ENCODE measurements at regions of chr5 and their contacts with region 1.

Region 1: GRCh38 chr5:146965761-146966659 is 87.5 kb upstream of the PPP2R2B start:
- DNase-seq: peak; percentile 67
- ATAC-seq: peak; percentile 87
- H3K4me3 Mint-ChIP-seq: no peak overlapping the region
- H3K27ac Mint-ChIP-seq: no peak overlapping the region
- H3K4me1 Mint-ChIP-seq: peaks cover 3% of the 10 kb centered on the region
- H3K27me3 Mint-ChIP-seq: no peaks in the 10 kb centered on the region
- CTCF ChIP-seq: peak; percentile 86

Region 2: DNA sequence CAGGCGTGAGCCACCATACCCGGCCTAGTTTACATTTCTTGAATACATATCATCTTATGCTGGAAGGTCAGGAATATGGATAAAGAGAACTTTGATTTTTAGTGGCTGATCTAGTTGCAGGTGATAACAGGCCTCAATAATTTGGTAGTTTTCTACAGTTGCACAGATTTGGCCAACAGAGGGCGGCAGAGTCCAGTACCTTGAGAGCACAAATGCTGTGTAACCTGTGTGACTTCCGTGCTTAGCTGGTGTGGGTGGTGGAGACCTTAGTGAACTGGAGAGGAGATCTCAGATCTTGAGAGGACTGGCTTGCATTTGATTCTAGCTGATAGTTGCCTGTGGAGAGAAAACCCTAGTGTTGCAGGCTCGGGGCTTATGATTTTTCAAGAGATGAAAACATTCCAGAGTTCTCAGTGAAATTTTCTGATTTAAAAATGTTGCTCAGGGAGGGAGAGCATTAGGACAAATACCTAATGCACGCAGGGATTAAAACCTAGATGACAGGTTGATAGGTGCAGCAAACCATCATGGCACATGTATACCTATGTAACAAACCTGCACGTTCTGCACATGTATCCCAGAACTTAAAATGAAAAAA is 432.7 kb before region 1 on chr5:
- CTCF ChIA-PET with region 1: interaction called, 83 read pairs
- POLR2A ChIA-PET with region 1: no interaction called
- intact Hi-C with region 1: no loop called
- DNase-seq: peak; percentile 89
- ATAC-seq: peak; percentile 95
- H3K4me3 Mint-ChIP-seq: no peak overlapping the region
- H3K27ac Mint-ChIP-seq: no peak overlapping the region
- H3K4me1 Mint-ChIP-seq: peaks cover 3% of the 10 kb centered on the region
- H3K27me3 Mint-ChIP-seq: peaks cover 1% of the 10 kb centered on the region
- CTCF ChIP-seq: peak; percentile 73

Region 3: DNA sequence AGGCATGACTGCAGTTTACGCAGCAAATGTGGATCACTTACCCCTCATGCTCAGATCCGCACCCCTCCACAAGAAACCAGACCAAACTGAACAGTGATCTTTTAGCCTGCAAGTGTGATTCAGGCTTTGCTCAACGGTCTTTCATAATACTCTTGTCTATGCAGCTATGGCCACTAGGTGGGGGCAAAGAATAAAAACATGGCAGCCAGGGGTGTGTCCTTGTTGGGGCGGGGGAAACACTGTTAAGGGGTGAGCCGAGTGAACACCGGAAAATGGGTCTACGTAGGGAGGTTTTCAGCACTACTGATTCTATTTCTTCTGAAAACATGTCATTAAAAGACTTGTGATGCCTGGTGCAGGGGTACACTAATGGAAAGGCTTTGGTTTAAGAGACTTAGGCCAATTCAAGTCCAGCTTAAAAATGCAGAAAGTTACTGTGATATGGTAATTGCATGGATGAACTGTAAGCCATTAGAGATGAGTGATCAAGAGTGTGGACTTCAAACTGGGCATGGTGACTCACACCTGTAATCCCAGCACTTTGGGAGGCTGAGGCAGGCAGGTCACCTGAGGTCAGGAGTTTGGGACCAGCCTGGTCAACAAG is 400.1 kb before region 1 on chr5:
- CTCF ChIA-PET with region 1: interaction called, 15 read pairs
- POLR2A ChIA-PET with region 1: no interaction called
- intact Hi-C with region 1: loop called (anchors 5 kb)
- DNase-seq: peak; percentile 76
- ATAC-seq: peak; percentile 100
- H3K4me3 Mint-ChIP-seq: no peak overlapping the region
- H3K27ac Mint-ChIP-seq: no peak overlapping the region
- H3K4me1 Mint-ChIP-seq: peaks cover 5% of the 10 kb centered on the region
- H3K27me3 Mint-ChIP-seq: peaks cover 2% of the 10 kb centered on the region
- CTCF ChIP-seq: peak; percentile 65

Region 4: DNA sequence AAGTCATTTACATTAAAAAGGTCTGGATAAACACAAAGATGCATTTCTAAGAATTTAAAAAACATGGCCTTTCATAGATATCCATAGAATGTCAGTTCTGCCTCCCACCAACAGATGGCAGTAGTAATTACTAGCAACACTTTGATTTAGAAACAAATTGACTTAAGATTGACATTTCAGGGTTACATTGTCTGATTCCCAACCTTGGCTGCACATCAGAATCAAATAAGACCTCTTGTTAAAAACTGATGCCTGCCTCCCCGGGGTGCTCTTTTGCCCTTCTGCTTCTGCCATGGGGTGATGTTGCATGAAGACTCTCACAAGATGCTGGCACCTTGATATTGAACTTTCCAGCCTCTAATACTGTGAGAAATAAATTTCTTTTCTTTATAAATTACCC is 303.8 kb before region 1 on chr5:
- CTCF ChIA-PET with region 1: interaction called, 59 read pairs
- POLR2A ChIA-PET with region 1: no interaction called
- intact Hi-C with region 1: loop called (anchors 2 kb)
- DNase-seq: no peak
- ATAC-seq: no peak
- H3K4me3 Mint-ChIP-seq: no peak overlapping the region
- H3K27ac Mint-ChIP-seq: no peak overlapping the region
- H3K4me1 Mint-ChIP-seq: peaks cover 6% of the 10 kb centered on the region
- H3K27me3 Mint-ChIP-seq: no peaks in the 10 kb centered on the region
- CTCF ChIP-seq: peak; percentile 82

Region 5: DNA sequence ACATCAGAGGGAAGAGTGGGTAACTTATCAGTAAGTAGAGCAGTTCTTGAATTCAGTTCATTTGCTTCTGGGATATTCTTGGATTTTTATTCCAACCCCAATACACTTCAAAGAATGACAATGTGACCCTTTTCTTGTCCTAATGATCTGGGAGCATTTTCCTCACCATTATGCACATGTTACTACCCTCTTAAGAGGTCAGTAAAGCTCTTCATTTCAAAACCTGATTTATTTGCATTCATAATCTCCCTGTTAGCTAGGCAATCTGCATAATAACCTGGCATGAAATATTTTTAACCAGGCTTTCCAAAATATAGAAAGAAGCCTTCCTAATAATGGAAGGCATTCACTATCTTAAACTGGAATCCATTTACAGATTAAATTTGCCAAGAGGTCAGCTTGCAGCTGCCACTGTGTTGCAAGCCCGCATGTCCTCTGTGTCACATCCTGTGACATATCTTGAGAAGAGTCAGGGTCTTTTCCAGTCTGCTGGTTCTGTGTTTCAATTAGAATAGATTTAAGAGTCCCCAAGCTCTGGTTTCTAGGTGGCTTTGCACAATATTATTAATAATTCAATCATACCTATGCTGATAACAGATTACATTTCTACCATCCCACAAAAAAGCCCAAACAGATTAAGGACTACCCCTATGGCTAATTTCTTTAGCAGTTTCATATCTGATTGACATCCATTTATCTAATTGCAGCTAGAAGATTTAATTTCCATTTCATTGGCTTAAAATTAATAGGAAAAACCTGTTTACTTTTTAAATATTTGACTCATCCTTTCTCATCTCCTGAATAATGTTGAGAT is 56.5 kb before region 1 on chr5:
- CTCF ChIA-PET with region 1: no interaction called
- POLR2A ChIA-PET with region 1: no interaction called
- intact Hi-C with region 1: no loop called
- DNase-seq: no peak
- ATAC-seq: no peak
- H3K4me3 Mint-ChIP-seq: no peak overlapping the region
- H3K27ac Mint-ChIP-seq: no peak overlapping the region
- H3K4me1 Mint-ChIP-seq: peaks cover 7% of the 10 kb centered on the region
- H3K27me3 Mint-ChIP-seq: no peaks in the 10 kb centered on the region
- CTCF ChIP-seq: no peak

Region 6: GRCh38 chr5:147188200-147189108 is 222.4 kb after region 1 on chr5:
- CTCF ChIA-PET with region 1: interaction called, 8 read pairs
- POLR2A ChIA-PET with region 1: no interaction called
- intact Hi-C with region 1: loop called (anchors 5 kb)
- DNase-seq: peak; percentile 54
- ATAC-seq: peak; percentile 67
- H3K4me3 Mint-ChIP-seq: no peak overlapping the region
- H3K27ac Mint-ChIP-seq: no peak overlapping the region
- H3K4me1 Mint-ChIP-seq: peaks cover 7% of the 10 kb centered on the region
- H3K27me3 Mint-ChIP-seq: peaks cover 10% of the 10 kb centered on the region
- CTCF ChIP-seq: peak; percentile 67